Sigmoid colon (tissue), 7 donors: ENCODE measurements at regions of chr11 and their contacts with region 1.

Region 1: GRCh38 chr11:78161962-78162371 is 22.5 kb upstream of the ALG8 start:
- DNase-seq: peak; percentile 93
- H3K4me3 ChIP-seq: no peak overlapping the region
- H3K27ac ChIP-seq: peak overlapping the region; percentile 1 to 75 (median 42)
- H3K4me1 ChIP-seq: peaks cover 0 to 73% (median 62%) of the 10 kb centered on the region in 4 donors
- H3K27me3 ChIP-seq: no peaks in the 10 kb centered on the region
- CTCF ChIP-seq: no peak
- EP300 ChIP-seq: peak in 2 of 4 donors; percentile 33 to 61
- POLR2A ChIP-seq: no peak

Region 2: DNA sequence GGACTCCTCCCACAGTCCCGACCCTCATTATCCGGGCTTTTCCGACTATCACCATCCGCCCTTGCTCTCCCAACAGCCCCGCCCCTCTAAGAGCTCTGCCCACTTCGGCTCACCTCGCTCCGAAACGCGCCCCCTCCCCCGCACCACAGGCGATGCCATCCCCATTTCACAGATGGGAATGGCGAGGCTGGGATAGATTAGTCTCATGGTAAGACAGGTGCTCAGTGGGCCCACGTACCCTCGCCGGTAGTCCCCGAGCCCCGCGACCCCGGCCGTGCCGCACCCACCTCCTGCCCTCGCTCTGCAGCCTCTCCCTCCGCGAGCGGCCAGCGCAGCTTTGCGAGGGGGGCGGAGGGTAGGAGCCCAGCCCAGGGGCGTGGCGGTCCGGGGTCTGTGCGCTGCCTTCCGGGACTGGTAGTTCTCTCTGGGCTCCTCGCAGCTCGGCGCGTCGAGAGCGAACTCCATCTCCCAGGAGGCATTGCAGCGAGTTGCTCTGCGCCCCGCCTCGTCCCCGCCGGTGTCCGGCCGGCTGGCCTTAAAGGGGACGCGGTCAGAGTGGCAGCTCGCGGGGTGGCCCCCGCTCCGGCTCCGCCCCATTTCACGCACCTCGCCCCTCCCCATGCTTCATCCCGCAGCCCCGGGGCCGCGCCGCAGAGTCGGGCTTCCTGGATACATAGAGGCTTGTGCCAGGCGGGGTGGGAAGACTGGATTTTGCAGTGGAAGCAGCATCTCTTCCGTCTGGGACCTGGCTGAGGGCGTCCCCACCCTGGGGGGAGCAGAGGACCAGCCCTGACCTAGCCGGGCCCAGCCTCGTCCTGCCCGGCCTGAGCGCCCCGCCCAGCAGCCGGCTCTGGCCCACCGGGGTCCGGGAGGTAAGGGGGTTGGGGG is 26.6 kb after region 1 on chr11 and contains the starts of genes KCTD21 and USP35:
- intact Hi-C with region 1: loop called (anchors 2 kb)
- DNase-seq: peak; percentile 98
- H3K4me3 ChIP-seq: peak within 1 kb of the TSS; percentile 70 to 97 (median 90)
- H3K27ac ChIP-seq: peak within 1 kb of the TSS; percentile 79 to 91 (median 88)
- H3K4me1 ChIP-seq: peaks cover 0 to 51% (median 39%) of the 10 kb centered on the region in 4 donors
- H3K27me3 ChIP-seq: no peaks in the 10 kb centered on the region
- CTCF ChIP-seq: no peak
- EP300 ChIP-seq: no peak
- POLR2A ChIP-seq: peak; percentile 38 to 70
- total RNA-seq, gene KCTD21: 5.4 to 18.8 (median 9.2) TPM
- total RNA-seq, gene USP35: 6.7 to 23.3 (median 10.6) TPM